GM23248 (cell line): ENCODE measurements at regions of chrX and their contacts with region 1.

Region 1: DNA sequence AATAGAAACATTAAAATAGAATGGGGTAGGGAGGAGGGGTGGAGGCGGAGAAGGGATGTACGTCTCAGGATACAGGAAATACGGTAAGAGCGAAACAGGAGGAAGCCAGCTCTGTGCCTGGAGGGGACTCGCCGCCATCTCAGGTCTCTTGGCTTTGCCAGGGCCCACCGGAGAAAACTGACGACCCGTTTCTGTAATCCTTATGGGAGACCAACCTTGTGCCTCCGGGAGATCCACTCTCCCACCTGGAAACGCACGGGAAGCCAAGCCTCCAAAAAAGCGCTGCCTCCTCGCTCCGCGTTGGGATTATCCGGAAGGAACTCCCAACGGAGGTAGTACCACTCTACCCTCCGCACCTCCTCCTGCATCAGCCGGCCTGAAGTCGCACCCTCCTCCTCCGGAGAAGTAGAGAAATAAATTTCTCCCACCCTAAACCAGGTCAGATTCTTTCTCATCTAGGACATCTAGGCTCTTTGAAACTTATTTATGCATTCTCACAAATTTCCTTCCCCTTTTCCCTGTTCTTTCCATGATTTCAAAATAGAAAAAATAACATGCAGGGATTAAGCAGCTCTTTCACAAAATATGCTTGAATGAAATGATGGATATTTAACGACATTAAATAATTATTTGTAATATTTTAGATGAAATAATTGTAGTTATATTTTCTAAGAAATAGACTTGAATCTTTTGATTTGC is at the start of gene NBDY:
- DNase-seq: peak; percentile 62
- H3K4me3 ChIP-seq: peak within 1 kb of the TSS; percentile 95
- H3K27ac ChIP-seq: peak within 1 kb of the TSS; percentile 74
- H3K4me1 ChIP-seq: peaks cover 10% of the 10 kb centered on the region; the same call in 1 of the 2 replicates
- H3K27me3 ChIP-seq: no peaks in the 10 kb centered on the region
- total RNA-seq, gene NBDY: 8.5 and 8.7 TPM in 2 replicates

Region 2: GRCh38 chrX:56281789-56282188 is 447.5 kb before region 1 on chrX:
- in situ Hi-C with region 1: loop called (anchors 25 kb)
- DNase-seq: peak; percentile 23
- H3K4me3 ChIP-seq: no peak overlapping the region
- H3K27ac ChIP-seq: no peak overlapping the region
- H3K4me1 ChIP-seq: no peaks in the 10 kb centered on the region
- H3K27me3 ChIP-seq: no peaks in the 10 kb centered on the region

Region 3: DNA sequence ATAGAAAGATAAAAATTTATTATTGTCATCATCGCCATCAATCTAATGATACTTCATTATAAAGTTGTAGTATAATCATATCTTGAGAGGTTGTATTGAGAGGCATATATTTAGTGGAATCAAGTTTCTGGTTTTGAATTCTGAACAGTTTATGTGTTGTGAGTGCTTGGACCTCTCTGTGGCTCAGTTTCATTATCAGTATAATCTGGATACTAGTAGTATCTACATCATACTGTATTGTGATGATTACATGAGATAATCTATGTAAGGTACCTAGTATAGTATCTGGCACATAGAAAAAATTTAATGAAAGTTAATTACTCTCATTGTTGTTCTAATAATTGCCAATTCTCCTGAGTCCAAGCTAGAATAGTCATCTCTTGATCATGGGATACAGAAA is 327.1 kb before region 1 on chrX:
- in situ Hi-C with region 1: no loop called
- DNase-seq: no peak
- H3K4me3 ChIP-seq: no peak overlapping the region
- H3K27ac ChIP-seq: no peak overlapping the region
- H3K4me1 ChIP-seq: no peaks in the 10 kb centered on the region
- H3K27me3 ChIP-seq: no peaks in the 10 kb centered on the region